ENCODE measurements at regions of chr3 and their contacts with region 1.

Region 1: DNA sequence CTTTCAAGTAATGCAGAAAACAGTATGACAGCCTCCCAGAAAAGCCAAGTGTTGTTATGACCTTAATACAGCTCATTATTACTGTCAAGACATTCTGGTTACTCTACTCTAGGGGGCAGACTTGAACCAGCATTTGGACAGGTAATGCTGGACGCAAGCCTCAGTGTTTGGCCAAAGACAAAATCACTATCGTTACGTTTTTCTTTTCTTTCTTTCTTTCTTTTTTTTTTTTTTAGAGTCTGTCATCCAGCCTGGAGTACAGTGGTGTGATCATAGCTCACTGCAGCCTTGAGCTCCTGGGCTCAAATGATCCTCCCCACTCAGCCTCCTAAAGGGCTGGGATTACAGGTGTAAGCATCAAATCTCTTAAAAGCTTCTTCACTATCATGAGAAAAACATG is 29.4 kb upstream of the TMEM45A start:
- DNase-seq: peak; percentile 52
- H3K4me3 ChIP-seq: no peak overlapping the region
- H3K27ac ChIP-seq: no peak overlapping the region
- H3K4me1 ChIP-seq: no peaks in the 10 kb centered on the region
- H3K27me3 ChIP-seq: peaks cover 3 to 5% of the 10 kb centered on the region in 2 experiments
- CTCF ChIP-seq: peak; percentile 55 to 68
- POLR2A ChIP-seq: no peak

Region 2: GRCh38 chr3:100306695-100307094 is 156.3 kb before region 1 on chr3:
- CTCF ChIA-PET with region 1: no interaction called
- POLR2A ChIA-PET with region 1: no interaction called
- dilution Hi-C with region 1: no loop called
- intact Hi-C with region 1: no loop called
- DNase-seq: no peak
- H3K4me3 ChIP-seq: no peak overlapping the region
- H3K27ac ChIP-seq: no peak overlapping the region
- H3K4me1 ChIP-seq: no peaks in the 10 kb centered on the region
- H3K27me3 ChIP-seq: no peaks in the 10 kb centered on the region
- CTCF ChIP-seq: no peak
- POLR2A ChIP-seq: no peak

Region 3: GRCh38 chr3:100400780-100401673 is 62.0 kb before region 1 on chr3 and contains the starts of genes LNP1 and TOMM70:
- CTCF ChIA-PET with region 1: interaction called, 13 read pairs
- POLR2A ChIA-PET with region 1: no interaction called
- dilution Hi-C with region 1: no loop called
- intact Hi-C with region 1: no loop called
- DNase-seq: peak; percentile 98
- H3K4me3 ChIP-seq: peak within 1 kb of the TSS; percentile 55 to 94 (median 76)
- H3K27ac ChIP-seq: peak within 1 kb of the TSS; percentile 75
- H3K4me1 ChIP-seq: peaks cover 23% of the 10 kb centered on the region
- H3K27me3 ChIP-seq: no peaks in the 10 kb centered on the region
- CTCF ChIP-seq: no peak
- POLR2A ChIP-seq: peak; percentile 93
- total RNA-seq, gene LNP1: 0.80 and 0.81 TPM in 2 replicates
- total RNA-seq, gene TOMM70: 28.3 and 32.3 TPM in 2 replicates

Region 4: DNA sequence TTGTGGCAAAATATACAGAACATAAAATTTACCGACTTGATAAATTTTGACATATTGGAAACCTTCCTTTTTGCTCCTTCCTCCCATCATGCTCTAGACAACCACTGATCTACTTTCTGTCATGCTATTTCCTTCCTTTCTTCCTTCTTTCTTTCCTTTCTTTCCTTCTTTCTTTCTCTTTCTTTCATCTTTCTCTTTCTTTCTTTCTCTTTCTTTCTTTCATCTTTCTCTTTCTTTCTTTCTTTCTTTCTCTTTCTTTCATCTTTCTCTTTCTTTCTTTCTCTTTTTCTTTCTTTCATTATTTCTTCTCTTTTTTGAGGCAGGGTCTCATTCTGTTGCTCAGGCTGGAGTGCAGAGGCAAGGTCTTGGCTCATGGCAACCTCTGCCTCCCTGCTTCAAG is 20.5 kb after region 1 on chr3:
- CTCF ChIA-PET with region 1: interaction called, 10 read pairs
- POLR2A ChIA-PET with region 1: no interaction called
- dilution Hi-C with region 1: no loop called
- intact Hi-C with region 1: no loop called
- DNase-seq: no peak
- H3K4me3 ChIP-seq: no peak overlapping the region
- H3K27ac ChIP-seq: no peak overlapping the region
- H3K4me1 ChIP-seq: no peaks in the 10 kb centered on the region
- H3K27me3 ChIP-seq: peaks cover 16 to 24% of the 10 kb centered on the region in 2 experiments
- CTCF ChIP-seq: no peak
- POLR2A ChIP-seq: no peak

Region 5: GRCh38 chr3:100590114-100590839 is 127.3 kb after region 1 on chr3:
- CTCF ChIA-PET with region 1: interaction called, 292 read pairs
- POLR2A ChIA-PET with region 1: no interaction called
- dilution Hi-C with region 1: no loop called
- intact Hi-C with region 1: loop called (anchors 1 kb)
- DNase-seq: peak; percentile 80
- H3K4me3 ChIP-seq: peak overlapping the region in 1 of 3 experiments; percentile 44
- H3K27ac ChIP-seq: no peak overlapping the region
- H3K4me1 ChIP-seq: peaks cover 3% of the 10 kb centered on the region
- H3K27me3 ChIP-seq: peaks cover 0 to 2% of the 10 kb centered on the region in 2 experiments
- CTCF ChIP-seq: peak; percentile 68 to 76
- POLR2A ChIP-seq: no peak

Region 6: DNA sequence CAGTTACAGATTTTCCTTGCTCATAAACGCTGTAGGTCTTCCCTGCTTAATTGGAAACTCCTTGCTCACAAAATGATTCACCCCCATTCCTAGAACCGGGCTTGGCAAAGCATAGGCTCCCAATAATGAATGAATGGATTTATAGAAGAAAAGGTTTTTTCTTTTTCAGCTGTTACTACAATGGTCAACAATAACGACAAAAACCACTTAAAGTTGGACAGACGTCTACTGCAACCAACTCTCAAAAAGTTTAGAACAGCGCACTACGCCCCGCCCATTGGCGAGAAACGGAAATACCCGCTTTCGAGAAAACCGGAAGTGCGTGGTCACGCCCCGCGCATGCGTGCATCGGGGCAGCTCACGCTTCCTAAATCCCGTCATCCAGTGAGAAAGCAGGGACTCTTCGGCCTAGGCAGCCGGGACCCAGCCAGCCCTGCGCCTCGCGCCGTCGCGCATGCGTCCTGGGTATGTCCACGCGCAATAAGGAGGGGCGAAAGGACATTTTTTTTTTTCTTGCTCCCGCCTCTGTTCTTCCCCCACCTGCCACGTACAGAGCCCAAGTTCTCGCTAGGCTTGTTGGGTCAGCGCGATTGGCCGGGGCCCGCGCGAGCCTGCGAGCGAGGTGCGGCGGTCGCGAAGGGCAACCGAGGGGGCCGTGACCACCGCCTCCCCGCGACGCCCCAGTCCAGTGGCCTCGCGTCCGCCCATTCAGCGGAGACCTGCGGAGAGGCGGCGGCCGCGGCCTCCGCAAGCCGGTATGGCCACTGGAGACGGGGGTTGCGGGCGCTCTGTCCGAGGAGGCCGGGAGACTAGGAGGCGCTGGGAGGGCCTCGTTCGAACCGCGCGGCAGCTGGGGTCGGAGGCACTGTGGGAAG is 246.2 kb after region 1 on chr3 and contains the start of gene TFG:
- CTCF ChIA-PET with region 1: interaction called, 26 read pairs
- POLR2A ChIA-PET with region 1: no interaction called
- dilution Hi-C with region 1: no loop called
- intact Hi-C with region 1: no loop called
- DNase-seq: peak; percentile 100
- H3K4me3 ChIP-seq: peak within 1 kb of the TSS; percentile 79 to 99 (median 89)
- H3K27ac ChIP-seq: peak within 1 kb of the TSS; percentile 78
- H3K4me1 ChIP-seq: peaks cover 8% of the 10 kb centered on the region
- H3K27me3 ChIP-seq: peaks cover 5 to 7% of the 10 kb centered on the region in 2 experiments
- CTCF ChIP-seq: no peak
- POLR2A ChIP-seq: peak; percentile 61
- total RNA-seq, gene TFG: 106 and 107 TPM in 2 replicates

Region 7: DNA sequence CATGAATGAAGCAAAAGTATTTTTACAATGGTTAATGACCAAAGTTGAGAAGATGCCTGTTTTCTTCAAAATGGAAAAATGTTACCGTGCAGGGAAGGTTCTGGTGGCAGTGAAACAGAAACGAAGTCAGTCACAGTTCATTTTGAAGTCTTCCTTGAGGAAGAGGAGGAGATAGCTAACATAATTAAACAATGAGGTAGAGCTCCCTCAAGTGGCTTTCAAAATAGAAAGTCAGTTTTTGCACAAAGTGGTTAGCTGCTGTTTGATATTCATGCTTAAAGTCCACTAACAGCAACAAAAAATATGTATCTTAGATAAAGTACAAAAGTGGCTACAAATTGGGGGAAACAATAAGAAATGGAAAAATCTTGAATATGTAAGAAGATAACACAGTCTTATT is 333.6 kb after region 1 on chr3:
- CTCF ChIA-PET with region 1: interaction called, 42 read pairs
- POLR2A ChIA-PET with region 1: no interaction called
- dilution Hi-C with region 1: no loop called
- intact Hi-C with region 1: no loop called
- DNase-seq: peak; percentile 62
- H3K4me3 ChIP-seq: no peak overlapping the region
- H3K27ac ChIP-seq: no peak overlapping the region
- H3K4me1 ChIP-seq: peaks cover 12% of the 10 kb centered on the region
- H3K27me3 ChIP-seq: no peaks in the 10 kb centered on the region
- CTCF ChIP-seq: peak in 1 of 2 donors; percentile 21
- POLR2A ChIP-seq: no peak

Region 8: GRCh38 chr3:100928638-100929428 is 465.8 kb after region 1 on chr3:
- CTCF ChIA-PET with region 1: no interaction called
- POLR2A ChIA-PET with region 1: no interaction called
- dilution Hi-C with region 1: no loop called
- intact Hi-C with region 1: no loop called
- DNase-seq: peak; percentile 32
- H3K4me3 ChIP-seq: no peak overlapping the region
- H3K27ac ChIP-seq: no peak overlapping the region
- H3K4me1 ChIP-seq: no peaks in the 10 kb centered on the region
- H3K27me3 ChIP-seq: no peaks in the 10 kb centered on the region
- CTCF ChIP-seq: no peak
- POLR2A ChIP-seq: no peak

Region 9: GRCh38 chr3:101635954-101636798 is 1173.2 kb after region 1 on chr3:
- CTCF ChIA-PET with region 1: interaction called, 6 read pairs
- POLR2A ChIA-PET with region 1: no interaction called
- dilution Hi-C with region 1: no loop called
- intact Hi-C with region 1: loop called (anchors 10 kb)
- DNase-seq: peak; percentile 60
- H3K4me3 ChIP-seq: no peak overlapping the region
- H3K27ac ChIP-seq: no peak overlapping the region
- H3K4me1 ChIP-seq: no peaks in the 10 kb centered on the region
- H3K27me3 ChIP-seq: no peaks in the 10 kb centered on the region
- CTCF ChIP-seq: peak; percentile 69 to 71
- POLR2A ChIP-seq: no peak